Activated CD4-positive, alpha-beta memory T cell treated with anti-CD3 and anti-CD28 coated beads for 36 hours (primary cell): ENCODE measurements at regions of chr20 and their contacts with region 1.

Region 1: DNA sequence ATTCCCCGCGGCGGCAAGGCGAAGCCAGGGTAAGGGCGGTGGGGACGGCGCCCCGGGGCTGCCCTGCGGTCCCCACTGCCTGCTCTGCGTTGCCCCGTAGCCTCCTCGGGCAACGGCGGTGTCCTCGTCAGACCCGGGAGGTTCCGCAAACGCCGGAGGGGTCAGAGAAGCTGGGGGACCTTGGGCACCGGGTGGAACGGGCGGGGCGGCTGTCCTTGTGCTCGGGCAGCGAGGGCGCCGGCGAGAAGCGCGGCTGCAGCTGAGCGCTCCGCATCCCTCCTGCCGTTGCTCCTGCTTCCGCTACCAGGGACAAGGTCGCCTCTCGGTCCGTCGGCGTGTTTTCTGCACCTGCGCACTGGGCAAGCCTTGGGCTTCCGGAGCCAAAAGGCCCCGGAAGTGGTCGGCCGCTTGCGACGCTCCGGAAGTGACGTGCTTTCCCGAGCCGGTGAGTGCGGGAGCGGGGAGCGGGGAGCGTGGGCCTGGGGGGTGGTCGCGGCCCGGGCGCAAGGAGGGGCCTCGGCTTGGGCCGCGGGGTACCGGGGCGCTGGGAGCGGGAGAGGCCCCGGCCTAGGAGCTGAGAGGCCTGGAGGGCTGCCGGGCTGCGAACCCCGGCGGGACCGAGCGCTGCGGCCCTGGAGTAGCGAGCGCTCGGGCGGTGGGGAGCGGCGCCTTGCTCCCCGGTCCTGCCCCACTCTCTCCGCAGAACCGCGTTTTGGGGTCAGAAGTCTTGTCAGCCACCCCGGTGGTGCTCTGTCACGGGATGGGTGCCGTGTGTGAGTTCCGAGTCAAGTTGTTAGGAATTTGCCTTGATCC is at the start of gene MTG2:
- DNase-seq: peak; percentile 96
- H3K4me3 Mint-ChIP-seq: peak within 1 kb of the TSS; percentile 87
- H3K27ac Mint-ChIP-seq: peak within 1 kb of the TSS; percentile 91
- H3K4me1 Mint-ChIP-seq: peaks cover 39% of the 10 kb centered on the region
- H3K27me3 Mint-ChIP-seq: no peaks in the 10 kb centered on the region
- total RNA-seq, gene MTG2: 31.4 to 32.5 TPM

Region 2: DNA sequence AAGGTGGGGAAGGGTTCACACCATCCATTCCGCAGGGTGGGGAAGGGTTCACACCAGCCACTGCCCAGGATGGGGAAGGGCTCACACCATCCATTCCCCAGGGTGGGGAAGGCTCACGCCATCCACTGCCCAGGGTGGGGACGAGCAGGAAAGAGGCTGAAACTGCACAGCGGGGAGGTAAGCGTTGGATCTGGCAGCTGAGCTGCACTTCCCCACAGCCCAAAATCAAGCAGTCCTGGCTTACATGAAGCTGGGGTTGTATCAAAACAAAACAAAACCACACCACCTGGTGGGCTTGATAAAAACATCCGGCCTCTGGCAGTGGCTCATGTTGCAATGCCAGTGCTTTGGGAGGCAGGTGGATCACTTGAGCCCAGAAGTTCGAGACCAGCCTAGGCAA is 385.6 kb before region 1 on chr20:
- CTCF ChIA-PET with region 1: no interaction called
- POLR2A ChIA-PET with region 1: no interaction called
- intact Hi-C with region 1: no loop called
- DNase-seq: no peak
- H3K4me3 Mint-ChIP-seq: no peak overlapping the region
- H3K27ac Mint-ChIP-seq: no peak overlapping the region
- H3K4me1 Mint-ChIP-seq: no peaks in the 10 kb centered on the region
- H3K27me3 Mint-ChIP-seq: peaks cover 4% of the 10 kb centered on the region

Region 3: GRCh38 chr20:62069741-62070216 is 113.0 kb before region 1 on chr20:
- CTCF ChIA-PET with region 1: no interaction called
- POLR2A ChIA-PET with region 1: no interaction called
- intact Hi-C with region 1: no loop called
- DNase-seq: no peak
- H3K4me3 Mint-ChIP-seq: no peak overlapping the region
- H3K27ac Mint-ChIP-seq: no peak overlapping the region
- H3K4me1 Mint-ChIP-seq: peaks cover 17% of the 10 kb centered on the region
- H3K27me3 Mint-ChIP-seq: no peaks in the 10 kb centered on the region

Region 4: DNA sequence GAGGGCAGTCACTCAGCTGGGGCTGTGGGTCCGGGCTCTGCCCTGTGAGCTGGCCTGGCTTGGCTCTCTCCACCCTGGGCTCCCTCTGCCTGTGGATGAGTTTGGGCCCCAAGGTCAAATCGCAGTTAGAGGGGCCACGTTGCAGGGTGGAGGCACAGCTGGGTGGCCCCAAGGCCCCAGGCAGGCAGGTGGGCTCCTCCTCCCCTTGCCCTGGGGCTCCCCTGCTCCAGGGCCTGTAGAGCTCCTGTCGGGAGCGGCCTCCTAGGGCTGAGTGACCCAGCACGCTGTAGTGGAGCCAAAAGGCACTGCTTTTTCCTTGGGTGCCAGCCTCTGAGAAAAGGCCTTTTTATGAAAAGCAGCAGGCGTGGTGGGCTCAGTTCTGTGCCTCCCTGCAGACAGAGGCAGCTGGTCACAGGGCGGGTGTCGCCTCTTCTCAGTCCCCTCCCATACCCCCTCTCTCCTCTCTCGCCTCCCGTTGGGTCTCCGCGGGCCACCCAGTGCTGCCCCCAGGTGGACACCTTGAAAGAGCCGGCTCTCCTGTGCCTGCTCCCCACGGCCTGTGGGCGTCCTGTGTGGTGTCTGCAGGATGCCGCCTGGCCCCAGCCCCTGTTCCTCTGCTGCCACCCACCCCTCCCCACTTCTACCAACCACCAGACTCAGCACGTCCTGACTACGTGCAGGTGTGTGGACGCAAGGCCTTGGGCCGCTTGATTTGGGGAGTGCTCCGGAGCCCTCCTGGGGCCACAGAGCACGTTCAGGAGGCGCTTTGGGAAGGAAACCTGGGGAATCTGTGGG is 26.0 kb before region 1 on chr20:
- CTCF ChIA-PET with region 1: no interaction called
- POLR2A ChIA-PET with region 1: no interaction called
- intact Hi-C with region 1: loop called (anchors 1 kb)
- DNase-seq: peak; percentile 81
- H3K4me3 Mint-ChIP-seq: no peak overlapping the region
- H3K27ac Mint-ChIP-seq: no peak overlapping the region
- H3K4me1 Mint-ChIP-seq: peaks cover 25% of the 10 kb centered on the region
- H3K27me3 Mint-ChIP-seq: no peaks in the 10 kb centered on the region

Region 5: GRCh38 chr20:62171245-62171644 is 11.6 kb before region 1 on chr20:
- CTCF ChIA-PET with region 1: no interaction called
- POLR2A ChIA-PET with region 1: no interaction called
- intact Hi-C with region 1: no loop called
- DNase-seq: no peak
- H3K4me3 Mint-ChIP-seq: no peak overlapping the region
- H3K27ac Mint-ChIP-seq: no peak overlapping the region
- H3K4me1 Mint-ChIP-seq: no peaks in the 10 kb centered on the region
- H3K27me3 Mint-ChIP-seq: no peaks in the 10 kb centered on the region

Region 6: GRCh38 chr20:62237801-62238571 is 55.2 kb after region 1 on chr20 and contains the start of gene OSBPL2:
- CTCF ChIA-PET with region 1: no interaction called
- POLR2A ChIA-PET with region 1: no interaction called
- intact Hi-C with region 1: loop called (anchors 1 kb)
- DNase-seq: peak; percentile 100
- H3K4me3 Mint-ChIP-seq: peak within 1 kb of the TSS; percentile 78
- H3K27ac Mint-ChIP-seq: peak within 1 kb of the TSS; percentile 80
- H3K4me1 Mint-ChIP-seq: peaks cover 37% of the 10 kb centered on the region
- H3K27me3 Mint-ChIP-seq: no peaks in the 10 kb centered on the region
- total RNA-seq, gene OSBPL2: 25.4 to 29.3 TPM